AG04449 (cell line): ENCODE measurements at regions of chr7 and their contacts with region 1.

Region 1: GRCh38 chr7:158976849-158977593 is 120.7 kb downstream of the DYNC2I1 start:
- DNase-seq: no peak
- H3K4me3 ChIP-seq: peak overlapping the region; percentile 46
- CTCF ChIP-seq: peak; percentile 80

Region 2: GRCh38 chr7:158685693-158686092 is 291.3 kb before region 1 on chr7:
- CTCF ChIA-PET with region 1: interaction called, 39 read pairs
- POLR2A ChIA-PET with region 1: no interaction called
- DNase-seq: no peak
- H3K4me3 ChIP-seq: no peak overlapping the region
- CTCF ChIP-seq: no peak

Region 3: GRCh38 chr7:158695726-158696452 is 281.1 kb before region 1 on chr7:
- CTCF ChIA-PET with region 1: interaction called, 200 read pairs
- POLR2A ChIA-PET with region 1: interaction called, 3 read pairs
- DNase-seq: no peak
- H3K4me3 ChIP-seq: no peak overlapping the region
- CTCF ChIP-seq: peak; percentile 73

Region 4: GRCh38 chr7:158704704-158705468 is 272.1 kb before region 1 on chr7 and contains the start of gene NCAPG2:
- CTCF ChIA-PET with region 1: interaction called, 12 read pairs
- POLR2A ChIA-PET with region 1: no interaction called
- DNase-seq: peak; percentile 82
- H3K4me3 ChIP-seq: peak within 1 kb of the TSS; percentile 94
- CTCF ChIP-seq: peak; percentile 24

Region 5: DNA sequence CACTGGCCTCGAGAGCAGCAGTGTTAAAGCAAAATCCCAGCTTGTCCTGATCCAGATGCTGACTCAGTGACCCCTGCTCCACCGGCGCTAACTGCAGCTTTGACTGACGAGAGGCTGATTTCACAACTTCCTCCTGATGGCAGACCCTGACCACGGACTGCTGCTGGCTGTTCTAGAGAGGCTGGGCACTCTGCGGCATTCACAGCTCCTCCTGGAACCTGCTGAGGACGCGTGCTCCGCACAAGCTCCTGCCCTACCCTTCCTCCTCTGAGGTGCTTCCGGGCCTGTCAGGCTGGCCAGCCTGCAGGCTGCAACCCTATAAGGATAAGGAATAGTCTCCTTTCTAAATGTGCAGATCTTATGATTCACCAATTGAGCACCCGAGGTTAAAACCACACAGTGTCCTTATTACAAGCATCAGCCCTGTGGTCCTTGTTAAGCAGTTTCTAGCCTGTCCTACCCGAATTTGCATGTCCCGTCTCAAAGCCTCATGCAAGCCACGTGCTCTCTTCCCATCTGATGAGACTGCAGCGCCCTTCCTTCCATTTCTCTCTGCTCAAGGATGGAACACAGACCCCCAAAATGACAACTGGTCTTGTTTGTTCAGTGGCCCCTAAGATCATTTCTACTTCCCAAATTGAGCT is 236.9 kb before region 1 on chr7:
- CTCF ChIA-PET with region 1: interaction called, 17 read pairs
- POLR2A ChIA-PET with region 1: no interaction called
- DNase-seq: peak; percentile 58
- H3K4me3 ChIP-seq: 0 out of 2 replicates have a peak overlapping the region, but pooled peaks have one; percentile 12
- CTCF ChIP-seq: no peak

Region 6: GRCh38 chr7:158958618-158959356 is 18.2 kb before region 1 on chr7:
- CTCF ChIA-PET with region 1: interaction called, 16 read pairs
- POLR2A ChIA-PET with region 1: no interaction called
- DNase-seq: no peak
- H3K4me3 ChIP-seq: no peak overlapping the region
- CTCF ChIP-seq: no peak

Region 7: DNA sequence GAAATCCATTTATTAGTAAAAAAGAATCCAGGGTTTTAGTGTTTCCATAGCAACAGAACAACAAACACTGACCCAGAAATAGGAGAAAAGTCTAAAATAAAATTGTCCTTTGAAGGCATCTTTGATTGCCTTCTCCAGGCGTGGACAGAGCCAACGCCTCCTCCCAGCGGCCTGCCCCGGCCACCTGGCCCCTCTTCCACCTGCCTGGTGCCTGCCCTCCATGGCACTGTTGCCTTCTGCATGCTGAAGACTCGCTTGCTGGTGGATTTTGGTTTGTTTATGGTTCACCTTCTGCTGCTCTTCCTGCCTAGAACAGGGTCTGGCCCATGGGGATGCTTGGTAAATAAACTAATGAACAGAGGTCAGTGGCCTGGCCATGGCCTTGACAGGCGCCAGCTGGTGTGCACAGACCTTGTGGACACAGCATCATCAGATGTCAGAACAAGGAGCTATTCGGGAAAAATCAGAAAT is 13.2 kb before region 1 on chr7:
- CTCF ChIA-PET with region 1: interaction called, 16 read pairs
- POLR2A ChIA-PET with region 1: no interaction called
- DNase-seq: no peak
- H3K4me3 ChIP-seq: no peak overlapping the region
- CTCF ChIP-seq: no peak

Region 8: DNA sequence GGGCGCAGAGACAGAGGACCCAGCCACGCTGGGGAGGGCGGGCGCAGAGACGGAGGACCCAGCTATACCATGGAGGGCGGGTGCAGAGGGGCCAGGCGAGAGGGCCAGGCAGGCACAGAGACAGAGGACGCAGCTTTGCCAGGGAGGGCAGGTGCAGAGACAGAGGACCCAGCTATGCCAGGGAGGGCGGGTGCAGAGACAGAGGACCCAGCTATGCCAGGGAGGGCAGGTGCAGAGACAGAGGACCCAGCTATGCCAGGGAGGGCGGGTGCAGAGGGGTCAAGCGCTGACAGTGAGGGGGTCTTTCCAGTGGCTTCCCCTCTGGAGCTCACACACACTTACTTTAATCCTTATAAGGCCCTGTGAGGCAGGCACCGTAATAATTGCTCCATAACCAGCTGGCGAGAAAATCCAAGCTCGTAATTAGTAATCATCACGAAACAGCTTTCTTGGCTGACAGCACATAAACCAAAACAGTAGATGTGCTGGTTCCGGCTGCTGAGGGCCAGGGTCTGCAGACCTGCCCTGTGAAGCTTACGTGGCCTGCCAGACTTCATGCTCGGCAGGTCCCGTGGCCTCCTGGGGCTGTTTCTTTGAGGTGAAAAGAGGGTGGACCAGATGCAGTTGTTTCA is 30.5 kb after region 1 on chr7:
- CTCF ChIA-PET with region 1: no interaction called
- POLR2A ChIA-PET with region 1: no interaction called
- DNase-seq: no peak
- H3K4me3 ChIP-seq: no peak overlapping the region
- CTCF ChIP-seq: no peak